Heart right ventricle (tissue), 16 donors: ENCODE measurements at regions of chr10 and their contacts with region 1.

Region 1: DNA sequence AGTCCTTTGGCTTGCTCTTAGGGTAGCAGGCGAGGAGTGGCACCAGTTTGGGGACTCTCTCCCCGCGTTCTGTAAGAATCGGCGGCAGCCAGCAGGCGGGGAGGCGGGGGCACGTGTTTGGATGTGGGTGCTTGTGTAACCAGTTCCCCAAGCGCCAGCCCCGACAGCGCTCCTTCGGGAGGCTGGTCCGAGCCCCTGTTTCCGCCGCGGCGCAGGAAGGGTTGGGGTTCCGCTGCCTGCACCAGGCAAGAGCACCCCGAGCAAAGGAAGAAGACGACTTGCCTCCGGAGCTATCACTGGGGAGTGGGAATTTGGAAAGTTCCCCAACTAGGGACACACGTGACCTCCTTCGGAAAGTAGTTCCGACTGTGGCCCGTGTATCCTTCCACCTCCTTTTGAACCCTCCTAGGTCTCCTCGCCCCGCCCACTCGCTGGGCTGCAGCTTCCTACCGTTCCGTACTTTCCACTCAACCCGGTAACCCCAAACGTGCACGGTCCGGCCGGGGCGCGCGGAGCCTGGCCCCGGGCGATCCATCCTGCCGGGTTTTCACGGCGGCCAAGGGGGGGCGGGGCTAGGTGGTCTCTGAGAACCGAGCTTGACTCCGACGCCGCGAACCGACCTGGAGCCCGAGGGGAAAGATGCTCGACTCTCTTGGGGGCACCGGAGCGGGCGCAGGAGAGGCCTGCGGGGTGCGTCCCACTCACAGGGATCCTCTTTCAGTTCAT is 1.2 kb downstream of the KLLN start:
- DNase-seq: peak; percentile 96 to 97
- ATAC-seq: peak; percentile 86 to 95 (median 92)
- H3K4me3 ChIP-seq: peak overlapping the region; percentile 77 to 90 (median 85)
- H3K27ac ChIP-seq: peak overlapping the region; percentile 91 to 99 (median 98)
- H3K4me1 ChIP-seq: peaks cover 0 to 20% (median 16%) of the 10 kb centered on the region in 9 donors
- H3K27me3 ChIP-seq: no peaks in the 10 kb centered on the region
- CTCF ChIP-seq: peak in 2 of 9 donors; percentile 7 to 20

Region 2: GRCh38 chr10:86262688-86263181 is 1599.4 kb before region 1 on chr10:
- intact Hi-C with region 1: no loop called
- DNase-seq: no peak
- ATAC-seq: no peak
- H3K4me3 ChIP-seq: peak overlapping the region in 2 of 10 donors; percentile 14 to 22
- H3K27ac ChIP-seq: no peak overlapping the region
- H3K4me1 ChIP-seq: peaks cover 0 to 8% (median 0%) of the 10 kb centered on the region in 9 donors
- H3K27me3 ChIP-seq: peaks cover 0 to 39% (median 30%) of the 10 kb centered on the region in 7 donors
- CTCF ChIP-seq: no peak

Region 3: GRCh38 chr10:87817609-87818504 is 44.3 kb before region 1 on chr10 and contains the start of gene ATAD1:
- intact Hi-C with region 1: no loop called
- DNase-seq: peak; percentile 82 to 84
- ATAC-seq: peak; percentile 98 to 99 (median 98)
- H3K4me3 ChIP-seq: peak within 1 kb of the TSS; percentile 43 to 87 (median 76)
- H3K27ac ChIP-seq: peak within 1 kb of the TSS; percentile 40 to 97 (median 90)
- H3K4me1 ChIP-seq: peaks cover 0 to 45% (median 31%) of the 10 kb centered on the region in 9 donors
- H3K27me3 ChIP-seq: no peaks in the 10 kb centered on the region
- CTCF ChIP-seq: peak in 4 of 9 donors; percentile 31 to 53 (median 42)
- total RNA-seq, gene ATAD1: 90.4 to 147 (median 100) TPM

Region 4: DNA sequence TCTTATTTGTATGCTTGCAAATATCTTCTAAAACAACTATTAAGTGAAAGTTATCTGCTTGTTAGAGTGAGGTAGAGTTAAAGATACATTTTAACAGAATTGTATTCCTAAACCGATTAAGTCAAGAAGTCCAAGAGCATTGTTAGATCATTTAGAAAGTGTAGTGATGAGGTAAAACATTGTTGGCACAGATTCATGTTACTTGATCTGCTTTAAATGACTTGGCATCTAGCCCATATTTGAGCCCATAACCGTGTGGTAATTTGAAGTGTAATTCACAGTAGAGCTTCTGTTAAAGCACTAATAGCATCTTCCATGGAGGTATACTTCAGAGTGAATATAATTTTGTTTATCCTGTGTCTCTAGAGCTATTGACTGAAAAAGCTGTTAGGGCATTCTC is 63.5 kb after region 1 on chr10:
- intact Hi-C with region 1: loop called in 1 of 10 experiments (anchors 5 kb)
- DNase-seq: no peak
- ATAC-seq: peak in 2 of 8 donors; percentile 8 to 25
- H3K4me3 ChIP-seq: no peak overlapping the region
- H3K27ac ChIP-seq: no peak overlapping the region
- H3K4me1 ChIP-seq: peaks cover 5 to 94% (median 76%) of the 10 kb centered on the region in 9 donors
- H3K27me3 ChIP-seq: no peaks in the 10 kb centered on the region
- CTCF ChIP-seq: no peak

Region 5: GRCh38 chr10:87961046-87961713 is 99.1 kb after region 1 on chr10:
- intact Hi-C with region 1: loop called in 3 of 10 experiments (anchors 5 to 10 kb)
- DNase-seq: no peak
- ATAC-seq: peak in 7 of 8 donors; percentile 20 to 86 (median 79)
- H3K4me3 ChIP-seq: no peak overlapping the region
- H3K27ac ChIP-seq: peak overlapping the region in 5 of 10 donors; percentile 6 to 45 (median 13)
- H3K4me1 ChIP-seq: peaks cover 0 to 28% (median 8%) of the 10 kb centered on the region in 9 donors
- H3K27me3 ChIP-seq: no peaks in the 10 kb centered on the region
- CTCF ChIP-seq: no peak

Region 6: GRCh38 chr10:88114368-88114767 is 252.3 kb after region 1 on chr10:
- intact Hi-C with region 1: loop called (anchors 1 to 10 kb)
- DNase-seq: peak; percentile 20 to 48
- ATAC-seq: peak; percentile 66 to 91 (median 84)
- H3K4me3 ChIP-seq: no peak overlapping the region
- H3K27ac ChIP-seq: no peak overlapping the region
- H3K4me1 ChIP-seq: peaks cover 0 to 63% (median 7%) of the 10 kb centered on the region in 9 donors
- H3K27me3 ChIP-seq: no peaks in the 10 kb centered on the region
- CTCF ChIP-seq: peak; percentile 12 to 75 (median 65)

Region 7: DNA sequence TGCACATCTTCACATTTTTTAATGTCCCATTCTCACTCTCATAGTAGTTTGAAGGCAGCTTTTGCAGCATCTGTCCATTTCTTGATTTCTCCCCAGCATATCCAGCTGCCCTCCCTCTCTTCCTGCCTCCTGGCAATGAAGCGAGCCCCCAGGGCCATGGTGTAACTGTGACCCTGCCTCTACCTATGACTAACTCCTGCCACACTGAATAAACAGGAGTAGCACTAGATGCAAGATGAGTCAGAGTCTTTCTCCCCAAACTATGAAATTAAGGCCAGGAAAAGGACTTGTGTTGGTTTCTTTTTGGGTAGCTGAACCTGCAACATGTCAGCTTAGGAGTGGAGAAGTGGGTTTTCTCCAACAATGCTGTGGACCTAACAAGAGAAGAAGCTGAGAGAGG is 392.0 kb after region 1 on chr10:
- intact Hi-C with region 1: loop called in 5 of 10 experiments (anchors 5 to 10 kb)
- DNase-seq: no peak
- ATAC-seq: peak in 1 of 8 donors; percentile 72
- H3K4me3 ChIP-seq: no peak overlapping the region
- H3K27ac ChIP-seq: peak overlapping the region in 3 of 10 donors; percentile 2 to 87 (median 26)
- H3K4me1 ChIP-seq: peaks cover 0 to 31% (median 3%) of the 10 kb centered on the region in 9 donors
- H3K27me3 ChIP-seq: no peaks in the 10 kb centered on the region
- CTCF ChIP-seq: no peak

Region 8: DNA sequence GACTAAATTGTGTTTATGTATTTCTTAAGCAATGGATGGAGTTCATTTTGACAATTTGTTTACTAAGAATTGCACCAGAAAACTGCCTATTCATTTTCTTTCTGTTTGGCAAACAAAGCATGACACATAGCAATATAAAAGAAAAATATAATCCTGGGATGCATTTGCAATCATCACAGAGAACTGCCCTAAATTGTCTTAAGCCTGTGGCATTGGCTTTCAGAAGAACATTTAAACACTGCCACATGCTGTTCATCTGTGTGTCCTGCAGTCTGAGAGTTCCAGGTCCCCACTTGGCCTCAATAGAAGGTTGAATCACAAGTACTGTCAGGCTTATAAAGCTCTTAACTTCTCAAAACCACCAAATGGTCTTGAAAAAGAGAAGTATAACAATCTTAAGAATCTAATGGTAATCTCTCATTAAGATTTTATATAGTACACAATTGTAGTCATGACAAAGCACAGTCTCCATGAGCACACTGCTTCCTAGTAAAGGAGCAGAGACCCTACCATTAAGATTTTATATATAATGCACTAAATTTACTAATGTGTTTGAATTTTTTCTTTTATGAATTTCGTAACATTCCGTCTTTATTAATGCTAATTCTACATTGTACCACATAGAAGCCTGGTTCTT is 691.1 kb after region 1 on chr10:
- intact Hi-C with region 1: loop called in 1 of 10 experiments (anchors 5 kb)
- DNase-seq: peak in 1 of 2 donors; percentile 54
- ATAC-seq: peak; percentile 72 to 96 (median 86)
- H3K4me3 ChIP-seq: no peak overlapping the region
- H3K27ac ChIP-seq: no peak overlapping the region
- H3K4me1 ChIP-seq: peaks cover 0 to 3% (median 0%) of the 10 kb centered on the region in 9 donors
- H3K27me3 ChIP-seq: no peaks in the 10 kb centered on the region
- CTCF ChIP-seq: peak; percentile 44 to 85 (median 78)